ENCODE measurements at regions of chr4 and their contacts with region 1.

Region 1: DNA sequence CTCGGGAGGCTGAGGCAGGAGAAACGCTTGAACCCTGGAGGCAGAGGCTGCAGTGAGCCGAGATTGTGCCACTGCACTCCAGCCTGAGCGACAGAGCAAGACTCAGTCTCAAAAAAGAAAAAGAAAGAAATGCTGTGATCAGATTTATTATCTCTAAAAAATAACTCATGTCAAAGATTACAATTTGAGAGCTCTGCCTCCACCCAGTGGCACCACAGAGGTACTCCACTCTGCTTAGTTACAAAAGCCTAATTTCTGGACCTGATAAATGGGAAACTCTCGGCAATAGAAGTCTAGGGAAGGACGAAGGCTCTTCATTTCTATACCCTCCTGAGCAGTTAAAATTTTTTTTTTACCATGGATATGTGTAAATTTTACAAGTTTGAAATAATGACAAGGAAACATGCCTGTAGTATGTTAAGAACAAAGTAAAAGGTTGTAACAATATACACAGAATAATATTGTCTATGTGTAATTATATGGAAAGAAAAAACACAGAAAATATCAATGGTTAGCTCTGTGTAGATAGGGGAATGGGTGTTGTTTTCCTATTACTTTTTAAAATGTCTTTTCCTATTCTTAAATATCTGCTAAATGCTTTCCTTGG is 149.8 kb downstream of the STIM2 start:
- DNase-seq: peak; percentile 78
- H3K4me3 ChIP-seq: no peak overlapping the region
- H3K27ac ChIP-seq: peak overlapping the region; percentile 44
- H3K4me1 ChIP-seq: peaks cover 74% of the 10 kb centered on the region
- CTCF ChIP-seq: peak; percentile 94

Region 2: GRCh38 chr4:26459054-26459755 is 551.2 kb before region 1 on chr4:
- CTCF ChIA-PET with region 1: interaction called, 3 read pairs
- POLR2A ChIA-PET with region 1: no interaction called
- intact Hi-C with region 1: loop called (anchors 1 kb)
- DNase-seq: peak; percentile 76
- H3K4me3 ChIP-seq: no peak overlapping the region
- H3K27ac ChIP-seq: no peak overlapping the region
- H3K4me1 ChIP-seq: peaks cover 12% of the 10 kb centered on the region
- CTCF ChIP-seq: peak; percentile 85

Region 3: DNA sequence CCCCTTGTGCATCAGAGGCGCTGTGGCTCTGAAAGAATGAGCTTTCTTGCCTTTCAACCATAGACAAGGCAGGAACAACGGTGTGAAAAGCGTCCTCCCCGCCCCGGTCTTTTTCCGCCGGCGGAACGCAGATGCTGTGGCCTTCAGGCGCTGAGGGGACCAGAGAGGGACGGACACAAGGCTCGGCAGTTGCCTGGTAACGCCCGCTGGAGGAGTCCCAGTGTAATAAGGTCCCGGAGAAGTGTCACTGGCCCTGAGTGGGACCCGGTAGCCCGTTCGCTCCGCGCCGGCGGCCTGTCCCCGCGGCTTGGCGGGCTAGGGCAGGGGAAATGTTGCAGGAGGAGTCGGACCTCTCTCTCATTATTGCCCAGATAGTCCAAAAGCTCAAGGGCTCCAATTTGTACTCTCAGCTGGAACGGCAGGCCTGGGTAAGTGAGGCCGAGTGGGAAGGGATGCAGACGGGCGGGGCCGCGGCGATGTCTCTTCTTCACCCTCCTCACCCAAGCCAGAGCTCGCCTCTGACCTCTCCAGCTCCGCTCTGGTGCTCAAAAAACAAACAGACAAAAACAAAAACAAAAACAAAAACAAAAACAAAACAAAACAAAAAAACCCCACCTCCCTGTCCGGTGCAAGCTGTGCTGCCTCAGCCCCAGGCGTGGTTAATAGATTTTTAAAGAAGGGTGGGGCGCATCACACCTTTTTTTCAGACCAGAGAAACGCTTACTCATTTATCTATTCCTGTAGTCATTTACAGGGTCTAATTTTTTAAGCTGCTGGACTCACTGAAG is 426.4 kb before region 1 on chr4 and contains the start of gene TBC1D19:
- CTCF ChIA-PET with region 1: no interaction called
- POLR2A ChIA-PET with region 1: no interaction called
- intact Hi-C with region 1: loop called (anchors 5 kb)
- DNase-seq: peak; percentile 93
- H3K4me3 ChIP-seq: peak within 1 kb of the TSS; percentile 86
- H3K27ac ChIP-seq: peak within 1 kb of the TSS; percentile 48
- H3K4me1 ChIP-seq: peaks cover 25% of the 10 kb centered on the region
- CTCF ChIP-seq: no peak; the same call in 1 of the 2 replicates
- total RNA-seq, gene TBC1D19: 9.8 and 11.0 TPM in 2 replicates

Region 4: DNA sequence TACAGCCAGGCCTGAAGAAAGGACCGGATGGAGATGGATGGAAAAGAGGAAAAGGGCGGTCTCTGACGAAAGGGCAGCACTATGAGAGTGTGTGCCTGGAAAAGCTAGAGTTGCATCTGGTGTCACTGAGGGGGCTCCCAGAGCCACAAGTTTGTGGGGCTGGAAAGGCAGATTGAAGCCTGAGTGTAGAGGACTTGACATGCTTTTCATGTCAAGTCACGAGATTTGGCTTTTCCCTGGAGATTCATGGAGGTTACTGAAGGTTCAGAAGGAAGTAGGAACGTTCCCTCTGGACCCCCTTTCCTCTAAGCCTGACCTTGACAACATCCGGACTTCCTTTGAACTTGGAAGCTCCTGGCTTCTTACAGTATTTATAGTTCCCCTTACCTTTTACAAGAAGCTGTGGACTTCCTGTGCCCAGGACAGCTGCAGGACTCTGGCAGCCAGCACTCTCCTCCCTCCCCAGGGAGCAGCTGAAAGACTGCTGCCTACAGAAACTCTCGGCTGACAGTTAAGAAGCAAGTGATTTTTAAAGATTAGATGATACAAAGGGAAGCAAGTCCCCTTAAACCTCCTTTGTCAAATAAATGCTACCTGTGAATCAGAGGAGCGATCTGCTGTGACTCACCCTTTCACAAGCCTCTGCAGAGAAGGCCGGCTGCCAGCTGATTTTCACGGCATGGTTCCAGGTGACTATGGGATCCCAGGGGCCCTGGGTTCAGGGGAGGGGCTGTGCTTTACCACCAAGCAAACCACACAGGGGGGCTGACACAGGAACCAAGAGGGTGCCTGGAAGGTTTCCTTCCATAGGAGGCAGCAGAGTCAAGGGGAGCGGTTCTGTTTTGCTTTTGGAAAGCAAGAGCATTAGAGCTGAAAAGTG is 222.7 kb before region 1 on chr4:
- CTCF ChIA-PET with region 1: no interaction called
- POLR2A ChIA-PET with region 1: interaction called, 22 read pairs
- intact Hi-C with region 1: loop called (anchors 1 kb)
- DNase-seq: peak; percentile 88
- H3K4me3 ChIP-seq: peak overlapping the region; percentile 59
- H3K27ac ChIP-seq: peak overlapping the region; percentile 84
- H3K4me1 ChIP-seq: peaks cover 42% of the 10 kb centered on the region
- CTCF ChIP-seq: peak; percentile 86

Region 5: DNA sequence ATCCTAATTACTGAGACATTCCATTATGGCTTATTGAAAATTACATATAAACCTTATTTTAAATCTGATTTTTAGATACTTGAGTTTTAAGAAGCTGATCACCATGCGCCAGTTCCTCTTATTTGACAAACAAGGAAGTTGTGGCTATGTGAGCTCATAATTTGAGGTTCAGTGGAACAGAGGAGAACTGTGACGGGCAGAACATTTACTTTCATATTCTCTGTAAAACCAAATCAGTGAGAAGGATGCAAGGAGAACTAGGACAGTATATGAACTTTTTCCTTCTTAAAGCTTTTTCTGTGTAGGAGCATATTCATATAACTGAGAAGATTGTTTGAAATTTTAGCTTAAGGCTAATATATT is 124.5 kb before region 1 on chr4:
- CTCF ChIA-PET with region 1: interaction called, 3 read pairs
- POLR2A ChIA-PET with region 1: interaction called, 63 read pairs
- intact Hi-C with region 1: no loop called
- DNase-seq: peak; percentile 88
- H3K4me3 ChIP-seq: peak overlapping the region; percentile 61
- H3K27ac ChIP-seq: peak overlapping the region; percentile 95
- H3K4me1 ChIP-seq: peaks cover 62% of the 10 kb centered on the region
- CTCF ChIP-seq: no peak